A673 (cell line): ENCODE measurements at regions of chr7 and their contacts with region 1.

Region 1: GRCh38 chr7:118352854-118353453 is 128.4 kb downstream of the ANKRD7 start:
- DNase-seq: peak; percentile 67
- H3K4me3 ChIP-seq: no peak overlapping the region
- H3K27ac ChIP-seq: no peak overlapping the region
- H3K4me1 ChIP-seq: no peaks in the 10 kb centered on the region
- H3K27me3 ChIP-seq: no peaks in the 10 kb centered on the region
- CTCF ChIP-seq: peak; percentile 61

Region 2: DNA sequence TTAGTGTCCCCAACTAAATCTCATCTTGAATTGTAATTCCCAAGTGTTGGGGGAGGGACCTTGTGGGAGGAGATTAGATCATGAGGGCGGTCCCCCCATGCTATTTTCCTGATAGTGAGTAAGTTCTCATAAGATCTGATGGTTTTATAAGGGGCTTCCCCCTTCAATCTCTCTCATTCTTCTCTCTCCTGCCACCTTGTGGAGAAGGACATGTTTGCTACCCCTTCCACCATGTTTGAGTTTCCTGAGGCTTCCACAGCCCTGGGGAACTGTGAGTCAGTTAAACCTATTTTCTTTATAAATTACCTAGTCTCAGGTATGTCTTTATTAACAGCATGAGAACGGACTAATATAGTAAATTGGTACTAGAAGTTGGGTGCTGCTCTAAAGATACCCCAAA is 237.2 kb after region 1 on chr7:
- CTCF ChIA-PET with region 1: no interaction called
- POLR2A ChIA-PET with region 1: no interaction called
- intact Hi-C with region 1: loop called (anchors 2 kb)
- DNase-seq: peak; percentile 62
- H3K4me3 ChIP-seq: no peak overlapping the region
- H3K27ac ChIP-seq: no peak overlapping the region
- H3K4me1 ChIP-seq: no peaks in the 10 kb centered on the region
- H3K27me3 ChIP-seq: no peaks in the 10 kb centered on the region
- CTCF ChIP-seq: peak; percentile 58

Region 3: DNA sequence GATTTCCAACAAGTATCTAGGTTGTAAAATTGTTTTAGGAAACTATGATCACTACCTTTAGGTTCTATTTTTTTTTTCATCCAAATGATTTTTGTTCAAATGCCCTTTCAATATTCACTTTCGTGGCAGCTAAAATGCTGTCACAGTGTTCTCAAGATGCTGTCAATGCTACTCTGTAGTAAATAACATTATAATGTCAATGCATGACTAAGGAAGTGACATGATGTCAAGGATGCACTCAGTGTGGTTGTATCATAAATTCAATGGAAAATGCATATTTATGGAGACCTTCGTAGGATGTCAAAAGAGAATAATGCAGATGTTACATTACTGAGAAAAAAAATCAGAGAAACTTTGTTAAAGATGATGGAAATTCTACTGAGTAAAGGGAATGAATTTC is 545.3 kb after region 1 on chr7:
- CTCF ChIA-PET with region 1: no interaction called
- POLR2A ChIA-PET with region 1: no interaction called
- intact Hi-C with region 1: loop called (anchors 10 kb)
- DNase-seq: no peak
- H3K4me3 ChIP-seq: no peak overlapping the region
- H3K27ac ChIP-seq: no peak overlapping the region
- H3K4me1 ChIP-seq: no peaks in the 10 kb centered on the region
- H3K27me3 ChIP-seq: no peaks in the 10 kb centered on the region
- CTCF ChIP-seq: no peak

Region 4: DNA sequence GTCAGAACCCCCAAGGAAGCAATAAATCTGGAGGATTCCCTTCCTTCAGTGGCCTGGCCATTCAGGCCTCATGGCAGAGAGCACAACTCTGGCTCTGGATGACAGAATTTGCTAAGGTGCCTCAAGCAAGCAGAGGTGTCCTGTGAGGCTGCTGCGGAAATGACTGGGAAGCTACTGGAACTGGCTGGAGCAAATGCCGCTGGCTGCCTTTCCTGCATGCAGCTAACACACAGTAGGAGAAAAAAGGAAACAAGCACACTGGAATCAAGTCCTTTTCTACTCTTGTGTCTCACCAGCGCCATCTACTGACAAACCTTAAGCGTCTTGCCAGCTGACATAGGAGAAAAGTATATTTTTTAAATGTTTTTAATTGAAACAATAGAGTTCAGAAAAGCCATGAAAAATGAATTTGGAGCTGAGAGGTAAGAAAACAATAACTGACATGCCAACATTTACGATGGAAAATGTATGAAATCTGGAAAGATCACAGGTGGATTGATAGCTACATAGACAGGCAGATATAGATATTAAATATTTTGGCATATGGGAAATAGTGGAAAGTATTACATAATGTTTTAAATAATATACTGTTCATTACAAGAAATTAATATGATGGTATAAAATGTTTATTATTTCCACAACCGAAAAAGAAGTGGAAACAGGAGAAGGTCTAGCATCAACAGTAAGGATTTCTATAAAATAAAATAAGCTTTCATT is 823.1 kb after region 1 on chr7:
- CTCF ChIA-PET with region 1: no interaction called
- POLR2A ChIA-PET with region 1: no interaction called
- intact Hi-C with region 1: loop called (anchors 5 kb)
- DNase-seq: peak; percentile 80
- H3K4me3 ChIP-seq: no peak overlapping the region
- H3K27ac ChIP-seq: no peak overlapping the region
- H3K4me1 ChIP-seq: peaks cover 6% of the 10 kb centered on the region
- H3K27me3 ChIP-seq: no peaks in the 10 kb centered on the region
- CTCF ChIP-seq: peak; percentile 87